ENCODE measurements at regions of chr2 and their contacts with region 1.

Region 1: GRCh38 chr2:20682167-20682920 is 15.4 kb downstream of the GDF7 start:
- DNase-seq: no peak
- H3K4me3 ChIP-seq: no peak overlapping the region
- H3K27ac ChIP-seq: peak overlapping the region in 1 of 2 donors; percentile 34
- H3K4me1 ChIP-seq: peaks cover 3 to 22% of the 10 kb centered on the region in 2 donors
- H3K27me3 ChIP-seq: no peaks in the 10 kb centered on the region
- CTCF ChIP-seq: peak; percentile 49 to 75 (median 57)

Region 2: DNA sequence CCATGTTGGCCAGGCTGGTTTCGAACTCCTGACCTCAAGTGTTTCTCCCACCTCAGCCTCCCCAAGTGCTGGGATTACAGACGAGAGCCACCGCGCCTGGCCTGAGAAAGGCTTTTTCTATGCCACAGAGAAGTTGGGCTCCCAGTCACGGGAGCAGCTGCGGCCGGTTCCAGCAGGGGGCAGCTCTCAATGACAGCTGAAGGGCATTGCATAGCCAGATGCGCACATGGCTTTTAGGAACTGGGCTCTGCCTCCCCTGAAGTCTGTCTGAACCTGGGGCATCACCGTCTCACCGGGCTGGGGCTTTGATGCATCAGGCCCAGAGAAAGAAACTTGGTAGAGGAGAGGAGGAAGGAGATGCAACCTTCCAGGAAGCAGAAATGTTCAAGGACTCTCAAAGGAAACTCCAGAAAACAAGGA is 546.7 kb before region 1 on chr2:
- intact Hi-C with region 1: no loop called
- DNase-seq: peak in 1 of 2 donors; percentile 77
- H3K4me3 ChIP-seq: no peak overlapping the region
- H3K27ac ChIP-seq: no peak overlapping the region
- H3K4me1 ChIP-seq: no peaks in the 10 kb centered on the region
- H3K27me3 ChIP-seq: no peaks in the 10 kb centered on the region
- CTCF ChIP-seq: peak; percentile 44 to 76 (median 64)

Region 3: DNA sequence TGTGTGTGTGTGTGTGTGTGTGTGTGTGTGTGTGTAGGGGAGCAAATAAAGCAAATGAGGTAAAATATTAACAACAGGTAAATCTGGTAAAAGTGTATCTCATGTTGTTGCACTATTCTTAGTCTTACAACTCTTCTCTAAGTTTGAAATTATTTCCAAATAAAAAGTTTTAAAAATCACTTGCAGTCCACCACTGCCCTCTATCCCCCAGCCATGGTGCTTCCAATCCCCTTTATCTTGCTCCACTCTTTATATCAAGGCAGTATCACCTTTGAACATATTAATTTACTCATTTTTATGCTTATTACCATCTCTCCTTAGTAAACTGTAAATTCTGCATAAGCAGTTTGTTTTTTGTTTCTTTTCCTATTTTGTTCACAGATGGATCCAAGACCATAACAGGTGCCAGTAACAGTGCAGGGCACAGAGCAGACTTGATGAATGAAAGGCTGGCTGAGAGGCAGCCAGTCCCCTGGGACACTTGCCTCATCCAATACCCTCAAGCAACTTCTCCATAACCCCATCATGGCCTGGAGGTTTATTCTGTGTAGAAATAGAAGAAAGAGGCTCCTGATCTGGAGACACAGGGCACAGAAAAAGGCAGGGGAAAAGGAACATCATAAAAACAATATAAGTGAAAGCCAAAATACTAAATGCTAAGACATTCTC is 72.9 kb after region 1 on chr2:
- intact Hi-C with region 1: loop called (anchors 2 kb)
- DNase-seq: no peak
- H3K4me3 ChIP-seq: no peak overlapping the region
- H3K27ac ChIP-seq: no peak overlapping the region
- H3K4me1 ChIP-seq: peaks cover 0 to 2% of the 10 kb centered on the region in 2 donors
- H3K27me3 ChIP-seq: no peaks in the 10 kb centered on the region
- CTCF ChIP-seq: peak in 1 of 3 experiments; percentile 46

Region 4: DNA sequence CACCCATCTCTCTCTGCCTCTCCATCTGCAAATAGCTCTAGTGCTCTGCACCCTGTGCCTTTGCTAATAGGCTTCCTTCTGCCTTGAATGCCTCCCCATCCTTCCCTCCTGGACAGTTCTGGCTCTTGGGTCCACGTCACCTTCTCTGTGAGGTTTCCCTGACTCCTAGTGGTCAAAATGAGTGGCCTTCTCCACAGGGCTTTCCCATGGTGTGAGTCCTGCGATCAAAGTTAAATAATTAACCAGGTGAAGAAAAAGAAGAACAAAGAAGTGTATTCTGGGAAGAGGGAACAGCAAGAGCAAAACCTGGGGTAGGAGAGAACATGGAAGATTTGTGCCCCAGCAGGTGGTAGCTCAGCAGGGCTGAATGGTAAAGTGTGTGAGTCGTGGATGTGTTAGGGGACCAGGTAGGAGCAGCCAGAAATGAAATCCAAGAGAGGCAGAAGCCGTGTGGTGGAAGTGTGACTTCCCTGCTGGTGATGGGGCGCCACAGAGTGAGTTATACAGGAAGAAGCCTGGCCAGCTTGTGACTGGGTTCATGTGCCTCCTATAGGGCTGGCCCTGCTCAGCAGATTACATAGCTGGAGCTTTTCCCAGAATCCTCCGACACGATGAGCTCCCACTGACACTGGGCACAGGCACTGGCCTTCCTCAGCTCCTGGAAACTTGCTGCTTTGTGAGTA is 234.4 kb after region 1 on chr2:
- intact Hi-C with region 1: loop called (anchors 5 kb)
- DNase-seq: no peak
- H3K4me3 ChIP-seq: no peak overlapping the region
- H3K27ac ChIP-seq: peak overlapping the region; percentile 53 to 62
- H3K4me1 ChIP-seq: peaks cover 0 to 10% of the 10 kb centered on the region in 2 donors
- H3K27me3 ChIP-seq: no peaks in the 10 kb centered on the region
- CTCF ChIP-seq: peak in 2 of 3 experiments; percentile 23 to 41

Region 5: GRCh38 chr2:21118302-21118920 is 436.1 kb after region 1 on chr2:
- intact Hi-C with region 1: loop called (anchors 1 kb)
- DNase-seq: peak in 1 of 2 donors; percentile 63
- H3K4me3 ChIP-seq: no peak overlapping the region
- H3K27ac ChIP-seq: no peak overlapping the region
- H3K4me1 ChIP-seq: no peaks in the 10 kb centered on the region
- H3K27me3 ChIP-seq: no peaks in the 10 kb centered on the region
- CTCF ChIP-seq: peak; percentile 37 to 66 (median 55)

Region 6: GRCh38 chr2:21317131-21317530 is 634.8 kb after region 1 on chr2:
- intact Hi-C with region 1: loop called (anchors 10 kb)
- DNase-seq: peak in 1 of 2 donors; percentile 69
- H3K4me3 ChIP-seq: no peak overlapping the region
- H3K27ac ChIP-seq: no peak overlapping the region
- H3K4me1 ChIP-seq: no peaks in the 10 kb centered on the region
- H3K27me3 ChIP-seq: no peaks in the 10 kb centered on the region
- CTCF ChIP-seq: peak; percentile 50 to 80 (median 61)

Measured in ascending aorta (tissue), 2 donors.